Mucosa of descending colon (tissue), 3 donors: ENCODE measurements at regions of chr1 and their contacts with region 1.

Region 1: DNA sequence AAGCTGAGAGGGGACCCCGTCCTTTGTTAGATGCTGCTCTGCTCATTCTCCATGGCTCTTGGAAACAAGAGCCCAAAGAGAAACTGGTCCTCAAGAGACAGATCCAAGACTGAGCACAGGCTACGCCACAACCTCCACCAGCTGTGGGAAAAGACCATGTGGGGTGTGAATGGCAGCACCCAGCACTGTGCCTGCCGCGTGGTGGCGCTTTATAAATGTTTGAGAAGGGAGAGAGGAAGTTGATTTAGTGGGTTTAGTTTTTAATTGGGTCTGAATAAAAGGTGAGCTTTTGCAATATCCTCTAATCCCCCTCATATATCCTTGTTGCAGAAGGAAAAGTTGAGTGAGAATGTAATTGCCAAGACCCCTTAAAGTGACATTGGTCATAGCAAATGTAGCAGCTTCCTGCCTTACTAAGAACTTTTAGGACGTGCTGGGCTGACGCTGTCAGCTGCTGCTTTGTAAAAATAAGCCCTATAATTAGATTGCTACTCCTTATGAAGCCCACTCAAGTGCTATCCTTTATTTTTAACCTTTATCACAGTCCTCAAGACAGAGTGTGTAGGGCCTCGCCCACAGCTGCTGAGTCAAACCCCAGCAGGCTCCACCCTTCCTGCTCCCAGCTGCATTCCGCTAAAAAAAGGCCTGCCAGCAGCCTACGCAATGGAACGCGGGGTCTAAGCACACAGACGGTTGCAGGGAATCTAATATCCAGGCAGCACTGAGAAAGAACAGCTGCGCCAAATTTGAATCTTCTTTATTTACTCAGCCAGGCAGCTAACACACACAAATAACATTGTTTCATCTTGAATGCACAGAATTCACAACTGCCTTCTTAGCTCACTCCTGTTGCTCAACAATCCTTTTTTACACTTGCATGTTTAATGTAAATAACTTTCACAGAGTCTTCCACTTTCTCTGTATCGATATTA is 47.4 kb upstream of the PRDX6 start:
- DNase-seq: peak; percentile 81 to 87 (median 86)
- ATAC-seq: peak; percentile 82
- H3K4me3 ChIP-seq: no peak overlapping the region
- H3K4me1 ChIP-seq: peaks cover 53% of the 10 kb centered on the region
- CTCF ChIP-seq: peak; percentile 12

Region 2: DNA sequence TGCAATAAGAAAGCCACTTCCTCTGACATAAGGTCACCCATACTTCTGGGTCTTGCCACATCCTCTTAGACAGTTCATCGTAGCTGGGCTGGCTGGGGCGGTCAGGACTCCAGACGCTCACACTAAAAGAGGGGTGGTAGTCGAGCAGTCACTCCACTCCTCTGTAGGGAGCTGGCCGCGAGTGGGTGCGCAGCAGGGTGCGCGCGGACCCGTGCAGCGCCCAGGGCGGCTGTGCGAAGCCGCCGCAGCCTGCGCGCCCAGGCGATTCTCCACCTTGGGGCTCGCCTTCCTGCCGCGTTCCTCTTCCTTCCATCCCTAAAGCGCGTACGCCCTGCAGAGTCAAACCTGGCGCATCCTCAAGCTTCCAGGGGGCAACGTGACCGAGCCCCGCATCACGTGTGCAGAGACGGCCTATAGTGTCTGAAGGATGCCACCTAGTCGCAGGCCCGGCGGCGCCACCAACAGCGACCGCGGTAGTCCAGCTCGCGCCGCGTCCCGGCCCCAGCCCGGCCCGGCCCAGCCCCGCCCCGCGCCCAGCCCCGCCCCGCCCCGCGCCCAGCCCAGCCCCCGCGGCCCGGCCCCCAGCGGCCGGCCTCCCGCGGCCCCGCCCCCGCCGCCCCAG is 47.0 kb after region 1 on chr1:
- intact Hi-C with region 1: loop called in 1 of 2 experiments (anchors 5 kb)
- DNase-seq: peak; percentile 92 to 95 (median 93)
- ATAC-seq: peak; percentile 90
- H3K4me3 ChIP-seq: peak overlapping the region; percentile 50
- H3K4me1 ChIP-seq: peaks cover 36% of the 10 kb centered on the region
- CTCF ChIP-seq: no peak

Region 3: DNA sequence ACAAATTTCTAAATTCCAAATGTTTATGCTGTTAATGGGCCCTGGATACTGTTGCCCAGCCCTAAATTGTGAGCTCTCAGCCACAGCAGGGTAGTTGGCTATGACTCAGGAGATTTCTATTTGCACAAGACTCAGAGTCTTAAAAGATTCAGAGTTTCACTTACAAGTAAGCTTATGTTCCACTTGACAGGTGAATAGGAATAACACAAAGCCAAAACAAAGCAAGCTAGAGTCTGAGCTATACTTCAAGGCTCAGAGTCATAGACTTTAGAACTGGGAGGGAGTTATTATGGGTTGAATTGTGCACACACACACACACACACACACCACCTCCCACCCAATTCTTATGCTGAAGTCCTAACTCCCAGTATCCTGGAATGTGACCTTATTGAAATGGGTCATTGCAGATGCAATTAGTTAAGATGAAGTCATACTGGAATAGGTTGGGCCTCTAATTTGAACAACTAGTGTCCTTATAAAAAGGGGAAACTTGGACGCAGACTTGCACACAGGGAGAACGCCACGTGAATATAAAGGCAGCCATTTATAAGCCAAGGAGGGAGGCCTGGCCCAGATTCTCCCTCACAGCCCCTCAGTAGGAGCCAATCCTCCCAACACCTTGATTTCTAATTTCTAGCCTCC is 77.6 kb after region 1 on chr1:
- intact Hi-C with region 1: loop called in 1 of 2 experiments (anchors 2 kb)
- DNase-seq: no peak
- ATAC-seq: peak; percentile 66
- H3K4me3 ChIP-seq: no peak overlapping the region
- H3K4me1 ChIP-seq: peaks cover 5% of the 10 kb centered on the region
- CTCF ChIP-seq: no peak

Region 4: DNA sequence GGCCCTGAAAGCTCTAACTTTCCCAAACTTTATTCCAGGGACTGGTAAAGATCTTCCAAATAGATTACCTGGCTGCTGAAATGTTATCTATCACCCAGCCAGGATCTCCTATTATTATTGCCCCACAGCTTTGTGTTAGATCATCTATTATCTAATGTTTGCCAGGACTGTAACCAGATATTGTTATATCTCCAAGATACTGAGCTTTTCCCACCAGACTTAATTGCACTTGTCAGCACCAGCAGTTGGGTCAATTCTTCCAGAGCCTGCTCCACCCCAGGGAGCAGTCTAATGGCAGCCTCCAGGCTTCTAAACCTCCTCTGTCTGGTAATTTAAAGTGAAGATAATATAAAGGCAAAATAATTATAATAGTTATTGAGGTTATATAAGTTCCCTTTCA is 106.5 kb after region 1 on chr1:
- intact Hi-C with region 1: no loop called
- DNase-seq: no peak
- ATAC-seq: no peak
- H3K4me3 ChIP-seq: no peak overlapping the region
- H3K4me1 ChIP-seq: no peaks in the 10 kb centered on the region
- CTCF ChIP-seq: no peak

Region 5: DNA sequence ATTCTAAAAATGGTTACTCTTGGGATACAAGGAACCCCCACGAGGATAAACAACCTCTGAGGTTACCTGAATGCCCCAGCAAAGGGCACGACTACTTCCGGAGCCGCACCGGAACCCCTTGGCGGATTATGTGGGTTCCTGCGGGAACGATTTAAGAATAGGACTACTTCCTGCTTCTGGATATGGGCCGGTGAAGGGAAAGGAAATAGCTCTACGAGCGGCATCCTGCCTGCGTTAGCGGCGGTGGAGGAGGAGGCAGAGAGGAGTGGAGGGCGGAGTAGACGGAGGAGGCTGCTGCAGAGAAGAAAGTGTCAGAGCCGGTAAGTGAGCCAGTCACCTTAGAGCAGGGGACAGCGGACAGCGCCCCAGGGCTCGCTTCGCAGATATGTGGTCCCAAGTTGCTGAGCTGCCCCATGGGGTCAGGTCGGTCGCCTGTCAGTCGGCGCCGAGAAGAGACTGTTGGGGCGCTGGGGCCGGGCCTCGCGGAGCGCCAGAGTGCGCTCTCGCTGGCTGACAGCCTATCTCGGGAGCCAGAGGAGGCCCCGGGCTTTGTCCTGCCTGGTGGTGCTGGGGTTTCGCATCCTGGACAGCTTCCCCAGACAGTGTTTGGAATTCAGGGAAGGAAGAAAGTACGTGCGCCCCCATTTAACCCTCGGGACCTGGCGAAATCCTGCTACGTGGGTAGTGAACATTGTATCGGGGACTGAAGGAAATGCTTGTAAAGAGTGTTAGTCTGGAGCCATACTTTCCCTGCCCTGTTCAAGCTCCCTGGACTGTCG is 285.2 kb after region 1 on chr1 and contains the start of gene KLHL20:
- intact Hi-C with region 1: loop called in 1 of 2 experiments (anchors 10 kb)
- DNase-seq: peak; percentile 86
- ATAC-seq: peak; percentile 99
- H3K4me3 ChIP-seq: peak within 1 kb of the TSS; percentile 45
- H3K4me1 ChIP-seq: peaks cover 18% of the 10 kb centered on the region
- CTCF ChIP-seq: no peak
- total RNA-seq, gene KLHL20: 18.3 to 34.8 (median 25.1) TPM

Region 6: GRCh38 chr1:173824331-173825081 is 394.8 kb after region 1 on chr1 and contains the starts of genes CENPL and DARS2:
- intact Hi-C with region 1: loop called in 1 of 2 experiments (anchors 10 kb)
- DNase-seq: peak; percentile 94 to 98 (median 94)
- ATAC-seq: peak; percentile 97
- H3K4me3 ChIP-seq: peak within 1 kb of the TSS; percentile 38
- H3K4me1 ChIP-seq: peaks cover 3% of the 10 kb centered on the region
- CTCF ChIP-seq: no peak
- total RNA-seq, gene CENPL: 6.5 to 8.3 (median 6.7) TPM
- total RNA-seq, gene DARS2: 15.2 to 29.4 (median 21.6) TPM